Calu3 (cell line): ENCODE measurements at regions of chr2 and their contacts with region 1.

Region 1: GRCh38 chr2:163778044-163778781 is 42.4 kb upstream of the FIGN start:
- DNase-seq: peak; percentile 72
- H3K4me3 Mint-ChIP-seq: peak overlapping the region; percentile 22
- H3K27ac Mint-ChIP-seq: peak overlapping the region; percentile 85
- H3K4me1 Mint-ChIP-seq: peaks cover 74% of the 10 kb centered on the region
- H3K27me3 Mint-ChIP-seq: no peaks in the 10 kb centered on the region
- CTCF ChIP-seq: no peak

Region 2: GRCh38 chr2:163748420-163749166 is 29.6 kb before region 1 on chr2:
- CTCF ChIA-PET with region 1: no interaction called
- intact Hi-C with region 1: no loop called
- DNase-seq: no peak
- H3K4me3 Mint-ChIP-seq: no peak overlapping the region
- H3K27ac Mint-ChIP-seq: no peak overlapping the region
- H3K4me1 Mint-ChIP-seq: peaks cover 8% of the 10 kb centered on the region
- H3K27me3 Mint-ChIP-seq: no peaks in the 10 kb centered on the region
- CTCF ChIP-seq: no peak

Region 3: DNA sequence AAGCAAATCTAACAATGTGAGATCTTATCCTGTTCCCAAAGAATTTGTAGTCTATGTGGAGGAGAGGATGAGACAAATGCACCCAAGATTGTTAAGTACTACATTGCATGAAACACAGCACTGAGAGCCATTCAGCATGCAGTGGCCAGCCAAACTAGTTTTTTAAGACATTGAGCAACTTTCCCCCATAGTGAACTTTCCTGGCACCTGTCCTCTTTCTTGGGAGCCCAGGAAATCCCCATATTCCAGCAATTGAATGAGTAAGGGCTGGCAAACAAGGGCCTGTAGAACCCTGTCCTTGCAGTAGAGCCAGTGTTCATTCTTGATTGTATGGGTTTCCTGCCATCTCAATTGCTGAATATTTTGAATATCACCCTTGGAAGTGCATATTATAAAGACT is 16.4 kb after region 1 on chr2:
- CTCF ChIA-PET with region 1: no interaction called
- intact Hi-C with region 1: loop called (anchors 2 kb)
- DNase-seq: peak; percentile 69
- H3K4me3 Mint-ChIP-seq: no peak overlapping the region
- H3K27ac Mint-ChIP-seq: peak overlapping the region; percentile 78
- H3K4me1 Mint-ChIP-seq: peaks cover 50% of the 10 kb centered on the region
- H3K27me3 Mint-ChIP-seq: no peaks in the 10 kb centered on the region
- CTCF ChIP-seq: no peak